IMR-90 (cell line): ENCODE measurements at regions of chr1 and their contacts with region 1.

Region 1: DNA sequence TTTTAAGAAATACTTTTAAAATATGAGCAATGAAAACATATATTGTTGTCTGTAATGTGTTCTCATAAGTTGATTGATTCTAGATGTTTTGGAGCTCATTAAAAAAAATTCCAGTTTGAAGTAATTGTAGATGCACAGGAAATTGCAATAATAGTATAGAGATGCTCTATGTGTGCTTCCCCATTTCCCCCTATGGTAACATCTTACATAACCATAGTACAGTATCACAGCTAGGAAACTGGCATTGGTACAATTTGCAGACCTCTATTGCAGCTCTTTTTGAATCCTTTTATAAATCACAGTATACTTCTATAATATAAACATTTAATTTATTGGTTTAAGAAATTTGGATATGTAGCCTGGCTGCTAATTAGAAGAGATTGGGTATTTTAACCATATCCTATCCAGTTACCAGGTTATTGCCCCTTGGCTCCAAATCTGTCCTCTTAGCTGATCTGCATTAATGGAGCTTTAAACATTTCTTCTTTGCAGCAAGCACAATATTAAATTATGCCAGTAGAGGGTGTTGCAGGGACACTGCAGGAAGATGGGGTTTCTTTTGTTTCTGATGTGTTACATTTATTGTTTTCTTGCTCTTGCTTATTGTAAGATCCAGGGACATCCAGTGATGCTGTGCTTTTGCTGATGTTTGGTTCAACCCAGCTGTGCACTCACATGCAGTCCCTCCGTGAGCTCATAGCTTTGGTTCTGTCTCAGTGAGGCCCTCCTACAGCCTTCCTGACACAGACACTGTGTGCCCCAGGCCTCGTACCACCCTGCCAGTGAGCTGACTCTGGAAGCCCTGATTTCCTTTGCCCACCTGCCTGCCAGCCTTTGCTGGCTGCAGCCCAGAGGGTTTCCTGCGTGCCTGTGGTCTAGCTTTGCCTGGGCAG is 103.3 kb downstream of the RABGAP1L start:
- DNase-seq: peak; percentile 65
- ATAC-seq: peak; percentile 83
- H3K4me3 ChIP-seq: no peak overlapping the region
- H3K27ac ChIP-seq: no peak overlapping the region
- H3K4me1 ChIP-seq: no peaks in the 10 kb centered on the region
- H3K27me3 ChIP-seq: no peaks in the 10 kb centered on the region
- CTCF ChIP-seq: peak; percentile 89
- POLR2A ChIP-seq: no peak
- RAD21 ChIP-seq: peak; percentile 89

Region 2: GRCh38 chr1:174700775-174701174 is 438.2 kb after region 1 on chr1:
- CTCF ChIA-PET with region 1: interaction called, 4 read pairs
- POLR2A ChIA-PET with region 1: no interaction called
- dilution Hi-C with region 1: loop called (anchors 25 kb)
- in situ Hi-C with region 1: no loop called
- intact Hi-C with region 1: no loop called
- DNase-seq: no peak
- ATAC-seq: no peak
- H3K4me3 ChIP-seq: no peak overlapping the region
- H3K27ac ChIP-seq: no peak overlapping the region
- H3K4me1 ChIP-seq: no peaks in the 10 kb centered on the region
- H3K27me3 ChIP-seq: no peaks in the 10 kb centered on the region
- CTCF ChIP-seq: no peak
- POLR2A ChIP-seq: no peak
- RAD21 ChIP-seq: no peak

Region 3: GRCh38 chr1:174734270-174734669 is 471.7 kb after region 1 on chr1:
- CTCF ChIA-PET with region 1: interaction called, 4 read pairs
- POLR2A ChIA-PET with region 1: no interaction called
- dilution Hi-C with region 1: no loop called
- in situ Hi-C with region 1: loop called (anchors 5 kb)
- intact Hi-C with region 1: no loop called
- DNase-seq: no peak
- ATAC-seq: no peak
- H3K4me3 ChIP-seq: no peak overlapping the region
- H3K27ac ChIP-seq: no peak overlapping the region
- H3K4me1 ChIP-seq: no peaks in the 10 kb centered on the region
- H3K27me3 ChIP-seq: no peaks in the 10 kb centered on the region
- CTCF ChIP-seq: no peak
- POLR2A ChIP-seq: no peak
- RAD21 ChIP-seq: no peak

Region 4: GRCh38 chr1:174982971-174983689 is 720.5 kb after region 1 on chr1:
- CTCF ChIA-PET with region 1: no interaction called
- POLR2A ChIA-PET with region 1: no interaction called
- dilution Hi-C with region 1: no loop called
- in situ Hi-C with region 1: loop called (anchors 25 kb)
- intact Hi-C with region 1: loop called (anchors 10 kb)
- DNase-seq: peak; percentile 49
- ATAC-seq: peak; percentile 32
- H3K4me3 ChIP-seq: no peak overlapping the region
- H3K27ac ChIP-seq: no peak overlapping the region
- H3K4me1 ChIP-seq: no peaks in the 10 kb centered on the region
- H3K27me3 ChIP-seq: no peaks in the 10 kb centered on the region
- CTCF ChIP-seq: peak; percentile 62
- POLR2A ChIP-seq: no peak
- RAD21 ChIP-seq: peak; percentile 47

Region 5: DNA sequence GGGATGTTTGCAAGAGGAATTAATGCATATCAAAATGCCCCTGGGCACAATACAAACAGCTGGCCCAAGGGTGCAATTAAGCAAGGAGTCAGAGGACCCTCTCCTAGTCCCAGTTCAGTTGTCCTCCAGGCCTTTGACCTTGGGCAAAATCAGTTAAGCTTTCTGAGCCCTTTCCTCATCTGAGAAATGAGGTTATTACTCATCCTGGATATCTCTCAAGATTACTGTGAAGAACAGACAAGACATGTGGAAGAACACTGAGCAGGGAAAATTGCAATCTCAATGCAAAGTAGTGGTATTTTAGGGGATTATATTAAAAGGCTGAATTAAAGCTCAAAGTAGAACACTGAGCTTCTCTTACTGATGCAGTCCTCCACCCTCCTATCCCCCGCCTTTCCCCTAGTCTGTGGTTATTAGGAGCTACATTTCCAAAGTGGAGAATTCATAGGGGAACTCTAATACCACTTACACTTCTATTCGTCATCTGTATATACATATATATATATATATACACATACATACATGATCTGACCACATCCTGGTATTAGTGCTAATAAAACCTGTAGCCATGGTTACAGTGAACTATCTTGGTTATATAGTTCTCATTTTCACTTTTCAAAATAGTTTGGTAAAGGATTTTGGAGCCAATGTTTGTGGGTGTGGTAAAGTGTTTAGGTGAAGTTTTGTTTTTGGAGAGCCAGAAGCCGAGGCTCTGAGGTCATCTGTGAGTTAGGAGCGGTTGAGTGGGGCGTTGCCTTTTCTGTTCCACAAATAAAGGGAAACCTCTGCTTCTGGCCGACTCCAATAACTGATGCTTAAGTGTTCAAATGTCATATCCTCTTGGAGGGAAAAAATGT is 911.9 kb after region 1 on chr1:
- CTCF ChIA-PET with region 1: no interaction called
- POLR2A ChIA-PET with region 1: no interaction called
- dilution Hi-C with region 1: no loop called
- in situ Hi-C with region 1: no loop called
- intact Hi-C with region 1: no loop called
- DNase-seq: no peak
- ATAC-seq: no peak
- H3K4me3 ChIP-seq: no peak overlapping the region
- H3K27ac ChIP-seq: no peak overlapping the region
- H3K4me1 ChIP-seq: no peaks in the 10 kb centered on the region
- H3K27me3 ChIP-seq: no peaks in the 10 kb centered on the region
- CTCF ChIP-seq: no peak
- POLR2A ChIP-seq: no peak
- RAD21 ChIP-seq: no peak